ENCODE measurements at regions of chr13 and their contacts with region 1.

Region 1: GRCh38 chr13:108734680-108735079 is 105.3 kb downstream of the MYO16 start:
- DNase-seq: no peak
- ATAC-seq: no peak
- H3K4me3 ChIP-seq: no peak overlapping the region
- H3K4me3 Mint-ChIP-seq: no peak overlapping the region
- H3K27ac ChIP-seq: no peak overlapping the region
- H3K27ac Mint-ChIP-seq: no peak overlapping the region
- H3K4me1 ChIP-seq: no peaks in the 10 kb centered on the region
- H3K4me1 Mint-ChIP-seq: no peaks in the 10 kb centered on the region
- H3K27me3 ChIP-seq: no peaks in the 10 kb centered on the region
- H3K27me3 Mint-ChIP-seq: no peaks in the 10 kb centered on the region
- CTCF ChIP-seq: no peak

Region 2: DNA sequence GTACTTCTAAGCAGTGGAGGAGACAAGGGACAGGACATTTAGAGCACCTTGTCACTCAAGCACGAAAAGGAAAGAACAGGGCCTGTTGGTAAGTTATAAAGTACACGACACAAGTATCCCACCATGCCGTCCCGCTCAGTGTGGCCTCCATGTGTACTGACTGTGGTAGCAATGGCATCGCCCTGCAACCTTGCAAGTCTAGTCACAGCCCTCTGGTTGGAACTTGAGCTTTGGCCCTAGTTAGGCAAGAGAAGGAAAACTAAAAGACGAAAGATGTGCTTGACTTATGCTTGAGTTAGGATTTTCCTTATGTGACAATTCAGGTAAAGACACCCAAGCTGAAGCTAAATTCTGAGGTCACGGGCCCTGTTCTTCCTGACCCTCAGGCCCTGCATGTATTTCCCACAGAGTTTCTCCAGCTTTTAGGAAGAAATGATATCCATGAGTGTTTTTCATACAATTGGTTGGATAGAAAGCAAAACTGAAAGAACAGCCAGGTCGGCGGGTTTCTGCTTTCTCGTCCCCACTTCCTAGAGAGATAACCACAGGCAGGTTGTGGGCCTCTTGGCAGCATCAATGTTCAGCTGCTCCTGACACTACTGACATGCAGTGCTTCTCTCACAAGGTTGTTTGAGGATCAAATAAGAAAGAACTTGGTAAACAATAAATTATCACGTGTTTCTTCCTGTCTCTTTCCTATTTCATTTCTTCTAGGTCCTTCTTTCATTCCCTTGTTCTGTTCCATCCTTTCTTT is 835.5 kb after region 1 on chr13:
- CTCF ChIA-PET with region 1: no interaction called
- POLR2A ChIA-PET with region 1: no interaction called
- intact Hi-C with region 1: loop called in 1 of 2 experiments (anchors 10 kb)
- DNase-seq: peak in 8 of 9 experiments; percentile 9 to 64 (median 40)
- ATAC-seq: peak; percentile 79
- H3K4me3 ChIP-seq: peak overlapping the region; percentile 3 to 37
- H3K4me3 Mint-ChIP-seq: peak overlapping the region; percentile 68
- H3K27ac ChIP-seq: peak overlapping the region in 1 of 2 experiments; percentile 21
- H3K27ac Mint-ChIP-seq: peak overlapping the region; percentile 83
- H3K4me1 ChIP-seq: peaks cover 15% of the 10 kb centered on the region
- H3K4me1 Mint-ChIP-seq: peaks cover 15% of the 10 kb centered on the region
- H3K27me3 ChIP-seq: no peaks in the 10 kb centered on the region
- H3K27me3 Mint-ChIP-seq: no peaks in the 10 kb centered on the region
- CTCF ChIP-seq: no peak

Measured in CD8-positive, alpha-beta T cell (primary cell).